Naive thymus-derived CD4-positive, alpha-beta T cell (primary cell): ENCODE measurements at regions of chr17 and their contacts with region 1.

Region 1: DNA sequence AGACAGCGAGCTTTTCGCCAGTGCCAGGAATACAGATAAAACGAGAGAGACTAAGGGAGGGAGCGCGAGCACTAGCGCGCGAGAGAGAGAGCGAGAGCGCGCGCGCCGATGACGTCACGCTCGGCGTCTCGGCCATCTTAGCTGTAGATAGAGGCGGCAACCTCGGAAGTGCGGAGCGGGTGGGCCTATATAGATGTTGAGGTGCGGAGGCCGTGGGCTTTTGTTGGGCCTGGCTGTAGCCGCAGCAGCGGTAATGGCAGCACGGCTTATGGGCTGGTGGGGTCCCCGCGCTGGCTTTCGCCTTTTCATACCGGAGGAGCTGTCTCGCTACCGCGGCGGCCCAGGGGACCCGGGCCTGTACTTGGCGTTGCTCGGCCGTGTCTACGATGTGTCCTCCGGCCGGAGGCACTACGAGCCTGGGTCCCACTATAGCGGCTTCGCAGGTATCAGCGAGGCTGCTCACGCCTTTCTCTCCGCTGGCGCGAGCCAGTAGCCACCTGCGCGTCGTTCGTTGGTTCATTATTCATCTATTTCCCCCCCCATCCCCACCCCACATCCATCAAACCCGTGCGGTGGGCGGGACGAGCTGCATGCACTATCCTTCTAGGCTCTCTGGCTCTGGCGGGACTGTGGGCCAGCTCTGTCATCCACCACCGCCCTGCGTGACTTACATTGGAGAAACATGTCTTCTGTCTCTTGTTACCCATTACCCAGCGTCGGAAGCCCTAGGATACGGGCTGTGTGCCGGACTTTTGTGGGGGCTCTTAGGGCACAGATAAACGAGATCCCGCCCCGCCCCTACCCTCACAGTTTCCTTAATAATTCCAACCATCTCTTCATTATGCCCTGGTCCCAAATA is 795 bp downstream of the CYB5D2 start:
- DNase-seq: peak; percentile 85 to 94 (median 91)
- ATAC-seq: peak; percentile 81
- H3K4me3 ChIP-seq: peak overlapping the region; percentile 90
- H3K4me3 Mint-ChIP-seq: peak overlapping the region; percentile 94 to 100 (median 99)
- H3K27ac ChIP-seq: peak overlapping the region; percentile 100
- H3K27ac Mint-ChIP-seq: peak overlapping the region; percentile 99 to 100 (median 100)
- H3K4me1 ChIP-seq: peaks cover 36 to 40% of the 10 kb centered on the region in 2 donors
- H3K4me1 Mint-ChIP-seq: peaks cover 36 to 48% (median 46%) of the 10 kb centered on the region in 7 donors
- H3K27me3 ChIP-seq: no peaks in the 10 kb centered on the region
- H3K27me3 Mint-ChIP-seq: peaks cover 0 to 2% (median 0%) of the 10 kb centered on the region in 5 donors

Region 2: DNA sequence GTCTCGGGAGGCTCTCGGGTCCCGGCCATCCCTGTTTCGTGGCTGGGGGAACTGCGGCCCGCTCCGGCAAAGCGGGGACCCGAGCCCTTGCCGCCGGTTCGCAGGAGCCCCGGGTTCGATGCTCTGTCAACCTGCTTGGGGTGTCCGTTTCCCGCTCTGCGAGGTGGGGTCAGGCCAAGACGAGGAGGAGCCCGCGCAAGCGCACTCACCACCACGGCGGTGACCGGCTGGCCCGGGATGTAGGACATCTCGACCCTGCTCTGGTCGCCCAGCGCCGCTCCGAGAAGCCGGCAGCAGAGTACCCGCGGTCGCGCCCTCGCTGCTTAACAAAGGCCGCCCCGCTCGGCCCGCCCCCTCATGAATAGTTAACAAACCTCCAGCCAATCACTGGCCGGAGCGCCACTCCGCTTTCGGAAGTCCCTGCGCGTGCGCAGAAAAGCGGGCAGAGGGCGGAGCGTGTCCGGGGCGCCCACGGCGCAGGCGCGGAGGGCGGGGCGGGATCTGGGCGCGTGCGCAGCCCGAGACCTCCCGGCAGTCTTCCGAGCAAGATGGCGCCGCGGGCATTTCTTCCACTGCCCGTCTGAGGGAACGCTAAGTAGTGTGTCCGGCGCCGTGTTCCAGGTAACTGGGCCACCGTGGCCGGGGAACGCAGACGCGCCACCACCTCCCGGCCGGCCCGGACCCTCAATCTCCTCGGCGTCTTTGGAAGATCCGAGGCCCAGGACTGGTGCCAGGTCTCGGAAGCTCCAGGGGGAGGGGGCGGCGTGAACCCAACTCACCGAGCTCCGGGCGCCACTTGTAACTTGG is 475.3 kb before region 1 on chr17 and contains the starts of genes EMC6 and TAX1BP3:
- CTCF ChIA-PET with region 1: no interaction called
- POLR2A ChIA-PET with region 1: no interaction called
- intact Hi-C with region 1: loop called in 1 of 2 experiments (anchors 1 kb)
- DNase-seq: peak; percentile 97 to 100 (median 100)
- ATAC-seq: peak; percentile 96
- H3K4me3 ChIP-seq: peak within 1 kb of the TSS; percentile 91
- H3K4me3 Mint-ChIP-seq: peak within 1 kb of the TSS; percentile 82 to 94 (median 91)
- H3K27ac ChIP-seq: peak within 1 kb of the TSS; percentile 76
- H3K27ac Mint-ChIP-seq: peak within 1 kb of the TSS; percentile 63 to 93 (median 85)
- H3K4me1 ChIP-seq: peaks cover 8 to 17% of the 10 kb centered on the region in 2 donors
- H3K4me1 Mint-ChIP-seq: peaks cover 21 to 43% (median 30%) of the 10 kb centered on the region in 7 donors
- H3K27me3 ChIP-seq: no peaks in the 10 kb centered on the region
- H3K27me3 Mint-ChIP-seq: peaks cover 0 to 2% (median 0%) of the 10 kb centered on the region in 5 donors
- total RNA-seq, gene EMC6: 23.1 to 39.0 (median 31.2) TPM
- total RNA-seq, gene TAX1BP3: 10.5 to 28.4 (median 11.7) TPM

Region 3: GRCh38 chr17:3965118-3965803 is 178.5 kb before region 1 on chr17:
- CTCF ChIA-PET with region 1: no interaction called
- POLR2A ChIA-PET with region 1: interaction called, 10 read pairs
- intact Hi-C with region 1: loop called in 1 of 2 experiments (anchors 1 kb)
- DNase-seq: peak; percentile 37 to 71 (median 66)
- ATAC-seq: peak; percentile 64
- H3K4me3 ChIP-seq: peak overlapping the region; percentile 69
- H3K4me3 Mint-ChIP-seq: peak overlapping the region; percentile 88 to 96 (median 94)
- H3K27ac ChIP-seq: peak overlapping the region; percentile 75
- H3K27ac Mint-ChIP-seq: peak overlapping the region; percentile 82 to 97 (median 94)
- H3K4me1 ChIP-seq: peaks cover 31 to 36% of the 10 kb centered on the region in 2 donors
- H3K4me1 Mint-ChIP-seq: peaks cover 34 to 50% (median 44%) of the 10 kb centered on the region in 7 donors
- H3K27me3 ChIP-seq: no peaks in the 10 kb centered on the region
- H3K27me3 Mint-ChIP-seq: peaks cover 0 to 4% (median 0%) of the 10 kb centered on the region in 5 donors

Region 4: GRCh38 chr17:4175921-4176807 is 32.4 kb after region 1 on chr17:
- CTCF ChIA-PET with region 1: interaction called, 11 read pairs
- POLR2A ChIA-PET with region 1: interaction called, 132 read pairs
- intact Hi-C with region 1: loop called (anchors 1 kb)
- DNase-seq: peak in 8 of 9 donors; percentile 46 to 73 (median 67)
- ATAC-seq: peak; percentile 85
- H3K4me3 ChIP-seq: peak overlapping the region; percentile 39
- H3K4me3 Mint-ChIP-seq: peak overlapping the region; percentile 61 to 93 (median 85)
- H3K27ac ChIP-seq: peak overlapping the region; percentile 82
- H3K27ac Mint-ChIP-seq: peak overlapping the region; percentile 92 to 100 (median 97)
- H3K4me1 ChIP-seq: peaks cover 46 to 57% of the 10 kb centered on the region in 2 donors
- H3K4me1 Mint-ChIP-seq: peaks cover 38 to 74% (median 62%) of the 10 kb centered on the region in 7 donors
- H3K27me3 ChIP-seq: no peaks in the 10 kb centered on the region
- H3K27me3 Mint-ChIP-seq: no peaks in the 10 kb centered on the region

Region 5: DNA sequence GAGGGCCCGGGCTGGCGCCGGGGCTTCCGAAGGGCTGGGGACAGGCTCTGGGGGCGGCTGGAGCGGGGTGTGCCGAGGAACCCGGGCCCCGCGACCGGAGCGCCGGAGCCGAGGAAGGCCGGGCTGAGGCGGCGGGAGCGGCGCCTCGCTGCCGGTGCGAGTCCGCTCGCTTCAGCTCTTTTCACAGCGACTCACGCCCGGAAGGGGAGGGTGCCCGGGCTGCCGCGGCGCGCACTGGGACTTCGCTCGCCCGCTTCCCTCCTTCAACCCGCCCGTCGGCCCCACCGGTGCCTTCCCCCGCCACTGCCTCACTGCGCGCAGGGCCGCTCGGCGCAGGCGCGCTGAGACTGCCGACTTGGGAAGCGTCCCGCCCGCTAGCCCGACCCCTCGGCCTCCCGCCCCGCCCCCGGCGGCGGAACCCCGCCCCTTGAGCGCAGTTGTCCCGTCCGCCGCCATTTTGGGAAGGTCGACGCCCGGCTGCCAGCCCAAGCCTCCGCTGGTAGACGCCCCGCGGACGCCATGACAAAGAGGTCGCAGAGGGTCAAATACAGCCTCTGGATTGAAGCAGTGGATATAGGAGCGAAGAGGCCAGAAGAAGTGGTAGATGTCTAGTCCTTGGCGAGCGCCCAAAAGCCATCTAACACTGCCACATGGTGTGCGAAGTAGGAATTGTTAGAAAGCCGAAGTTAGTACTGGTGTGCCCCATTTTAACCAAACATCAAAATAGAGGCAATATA is 222.7 kb after region 1 on chr17 and contains the start of gene UBE2G1:
- CTCF ChIA-PET with region 1: no interaction called
- POLR2A ChIA-PET with region 1: interaction called, 15 read pairs
- intact Hi-C with region 1: loop called (anchors 1 kb)
- DNase-seq: peak; percentile 97 to 100 (median 99)
- ATAC-seq: peak; percentile 93
- H3K4me3 ChIP-seq: peak within 1 kb of the TSS; percentile 58
- H3K4me3 Mint-ChIP-seq: peak within 1 kb of the TSS; percentile 82 to 95 (median 89)
- H3K27ac ChIP-seq: peak within 1 kb of the TSS; percentile 94
- H3K27ac Mint-ChIP-seq: peak within 1 kb of the TSS; percentile 91 to 99 (median 96)
- H3K4me1 ChIP-seq: peaks cover 11% of the 10 kb centered on the region in 2 donors
- H3K4me1 Mint-ChIP-seq: peaks cover 15 to 37% (median 33%) of the 10 kb centered on the region in 7 donors
- H3K27me3 ChIP-seq: no peaks in the 10 kb centered on the region
- H3K27me3 Mint-ChIP-seq: no peaks in the 10 kb centered on the region
- total RNA-seq, gene UBE2G1: 50.1 to 63.7 (median 56.6) TPM

Region 6: GRCh38 chr17:4739122-4740024 is 595.6 kb after region 1 on chr17 and contains the starts of genes CXCL16 and ZMYND15:
- CTCF ChIA-PET with region 1: no interaction called
- POLR2A ChIA-PET with region 1: no interaction called
- intact Hi-C with region 1: loop called in 1 of 2 experiments (anchors 10 kb)
- DNase-seq: peak; percentile 58 to 71 (median 64)
- ATAC-seq: peak; percentile 70
- H3K4me3 ChIP-seq: peak within 1 kb of the TSS; percentile 72
- H3K4me3 Mint-ChIP-seq: peak within 1 kb of the TSS; percentile 85 to 95 (median 92)
- H3K27ac ChIP-seq: peak within 1 kb of the TSS; percentile 49
- H3K27ac Mint-ChIP-seq: peak within 1 kb of the TSS; percentile 51 to 97 (median 92)
- H3K4me1 ChIP-seq: peaks cover 12 to 15% of the 10 kb centered on the region in 2 donors
- H3K4me1 Mint-ChIP-seq: peaks cover 12 to 25% (median 18%) of the 10 kb centered on the region in 7 donors
- H3K27me3 ChIP-seq: no peaks in the 10 kb centered on the region
- H3K27me3 Mint-ChIP-seq: peaks cover 0 to 36% (median 6%) of the 10 kb centered on the region in 5 donors
- total RNA-seq, gene CXCL16: 2.6 to 68.0 (median 3.4) TPM
- total RNA-seq, gene ZMYND15: 0.22 to 5.2 (median 1.4) TPM in 4 of 5 experiments, not detected in the other